ENCODE measurements at regions of chr18 and their contacts with region 1.

Region 1: DNA sequence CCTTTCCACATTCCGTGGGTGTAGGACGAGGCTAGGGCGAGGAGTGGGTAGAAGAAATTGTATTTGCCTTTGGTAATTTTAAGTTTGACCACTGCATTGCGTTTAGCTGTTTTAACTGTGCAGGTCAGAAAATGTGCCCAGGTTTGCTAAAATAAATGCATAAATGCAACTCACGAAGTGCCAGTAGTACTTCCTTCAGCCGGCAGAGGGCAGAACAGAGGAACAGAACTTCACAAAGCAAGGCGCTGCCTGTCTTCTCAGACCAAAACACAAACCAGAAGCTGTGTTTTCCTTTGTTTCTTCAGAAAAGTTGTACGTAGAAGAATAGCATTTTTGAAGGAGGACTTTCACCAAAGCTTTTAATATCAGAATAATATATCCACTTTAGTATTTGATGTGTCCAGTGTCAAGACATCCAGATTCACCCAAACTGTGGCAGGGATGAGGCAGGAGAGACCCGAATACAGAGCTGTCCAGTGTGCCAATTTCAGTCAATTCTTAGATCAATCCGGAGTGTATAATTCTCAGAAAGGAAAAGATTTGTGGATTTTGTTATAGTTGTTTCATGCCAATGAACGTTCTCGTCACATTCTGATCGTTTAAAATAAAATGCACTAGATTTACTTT is 348.6 kb downstream of the DLGAP1 start:
- ATAC-seq: peak; percentile 52 to 82 (median 60)
- H3K4me3 ChIP-seq: peak overlapping the region in 2 of 5 donors; percentile 14 to 15
- H3K27ac ChIP-seq: peak overlapping the region in 1 of 2 donors; percentile 65
- H3K4me1 ChIP-seq: peaks cover 8 to 15% of the 10 kb centered on the region in 2 donors

Region 2: GRCh38 chr18:3857544-3857943 is 249.0 kb before region 1 on chr18:
- in situ Hi-C with region 1: no loop called
- ATAC-seq: peak in 1 of 8 experiments; percentile 17
- H3K4me3 ChIP-seq: no peak overlapping the region
- H3K27ac ChIP-seq: no peak overlapping the region
- H3K4me1 ChIP-seq: no peaks in the 10 kb centered on the region

Region 3: GRCh38 chr18:3885209-3885792 is 221.2 kb before region 1 on chr18:
- in situ Hi-C with region 1: no loop called
- ATAC-seq: peak in 2 of 8 experiments; percentile 29 to 57
- H3K4me3 ChIP-seq: no peak overlapping the region
- H3K27ac ChIP-seq: no peak overlapping the region
- H3K4me1 ChIP-seq: no peaks in the 10 kb centered on the region

Region 4: DNA sequence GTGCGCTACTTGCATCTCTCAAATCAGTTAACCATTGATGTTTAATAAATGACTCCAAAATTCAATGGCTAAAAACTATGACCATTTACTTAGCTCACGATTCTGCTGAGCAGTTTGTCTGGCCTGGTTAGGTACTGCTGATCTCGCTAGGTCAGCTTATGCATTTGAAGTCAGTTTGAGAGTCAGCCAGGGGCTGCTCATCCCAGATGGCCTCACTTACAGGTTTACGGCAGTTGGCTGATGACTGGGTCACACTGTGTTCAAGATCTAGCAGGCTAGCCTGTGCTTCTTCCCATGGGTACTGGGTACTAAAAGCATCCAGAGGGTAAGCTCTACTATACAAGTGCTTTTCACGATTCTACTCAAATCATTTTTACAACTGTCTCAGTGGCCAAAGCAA is 226.5 kb after region 1 on chr18:
- in situ Hi-C with region 1: loop called in 1 of 9 experiments (anchors 25 kb)
- ATAC-seq: no peak
- H3K4me3 ChIP-seq: no peak overlapping the region
- H3K27ac ChIP-seq: no peak overlapping the region
- H3K4me1 ChIP-seq: no peaks in the 10 kb centered on the region

Region 5: DNA sequence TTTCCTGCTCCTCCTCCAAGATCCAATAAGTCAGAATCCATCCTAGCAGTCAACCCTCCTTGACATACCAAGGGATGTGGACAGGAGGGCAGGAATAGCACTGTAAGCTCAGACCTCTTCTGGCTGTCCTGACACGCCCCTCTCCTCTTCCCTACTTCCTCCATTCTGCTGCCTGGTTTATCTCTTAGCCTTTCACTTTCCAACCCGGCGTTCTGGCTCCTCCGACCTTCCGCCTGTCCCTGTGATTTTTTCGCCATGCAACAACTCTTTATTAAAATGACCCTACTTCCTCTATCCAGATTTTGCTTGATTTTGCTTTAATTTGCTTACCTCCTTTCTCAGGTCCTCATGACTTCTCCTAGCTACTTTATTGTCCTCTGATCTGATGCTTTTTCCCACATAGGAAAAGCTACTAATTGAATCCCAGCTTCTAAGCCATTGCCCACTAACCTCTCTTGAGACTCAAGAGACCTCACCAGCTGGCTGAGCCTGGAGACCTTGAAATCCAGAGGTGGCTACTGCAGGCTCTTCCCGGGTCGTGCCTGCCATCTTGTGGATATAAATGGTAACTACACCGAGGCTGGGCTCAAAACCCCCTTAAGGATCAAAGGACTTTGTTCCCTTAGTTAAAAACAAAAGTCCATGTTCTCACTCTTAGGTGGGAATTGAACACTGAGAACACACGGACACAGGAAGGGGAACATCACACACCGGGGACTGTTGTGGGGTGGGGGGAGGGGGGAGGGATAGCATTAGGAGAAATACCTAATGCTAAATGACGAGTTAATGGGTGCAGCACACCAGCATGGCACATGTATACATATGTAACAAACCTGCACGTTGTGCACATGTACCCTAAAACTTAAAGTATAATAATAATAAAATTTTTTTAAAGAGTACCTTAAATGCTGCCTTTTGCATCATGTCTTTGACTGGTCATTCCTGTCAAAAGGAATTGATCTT is 951.1 kb after region 1 on chr18:
- in situ Hi-C with region 1: loop called in 4 of 9 experiments (anchors 25 kb)
- ATAC-seq: peak; percentile 70 to 85 (median 80)
- H3K4me3 ChIP-seq: no peak overlapping the region
- H3K27ac ChIP-seq: no peak overlapping the region
- H3K4me1 ChIP-seq: no peaks in the 10 kb centered on the region

Measured in motor neuron (in vitro differentiated cells).